ENCODE measurements at regions of chr1 and their contacts with region 1.

Region 1: DNA sequence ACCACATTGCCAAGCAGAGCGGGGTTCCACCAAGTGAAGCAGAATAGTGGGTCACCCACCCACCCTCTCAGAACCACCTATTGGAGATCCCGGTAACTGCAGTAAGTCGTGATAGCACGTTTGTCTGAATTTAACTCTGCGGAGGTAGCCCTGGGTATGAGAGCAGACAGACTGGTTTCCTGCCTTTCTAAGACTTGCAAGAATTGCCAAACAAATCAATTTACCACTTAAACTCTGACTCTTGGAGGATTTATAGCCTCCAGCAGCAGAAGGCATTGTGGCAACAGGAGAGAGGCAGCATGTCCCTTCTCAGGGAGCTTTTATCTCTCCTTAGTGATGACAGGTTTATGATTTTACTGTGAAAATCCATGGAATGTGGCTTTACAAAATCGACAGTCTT is 287.9 kb upstream of the FMN2 start:
- DNase-seq: peak in 1 of 9 experiments; percentile 5
- ATAC-seq: no peak
- H3K4me3 ChIP-seq: no peak overlapping the region
- H3K4me3 Mint-ChIP-seq: no peak overlapping the region
- H3K27ac ChIP-seq: no peak overlapping the region
- H3K27ac Mint-ChIP-seq: no peak overlapping the region
- H3K4me1 ChIP-seq: no peaks in the 10 kb centered on the region
- H3K4me1 Mint-ChIP-seq: peaks cover 9% of the 10 kb centered on the region
- H3K27me3 ChIP-seq: no peaks in the 10 kb centered on the region
- H3K27me3 Mint-ChIP-seq: no peaks in the 10 kb centered on the region
- CTCF ChIP-seq: no peak

Region 2: GRCh38 chr1:239308701-239309333 is 495.0 kb before region 1 on chr1:
- CTCF ChIA-PET with region 1: interaction called, 5 read pairs
- POLR2A ChIA-PET with region 1: no interaction called
- intact Hi-C with region 1: loop called in 1 of 2 experiments (anchors 5 kb)
- DNase-seq: peak in 5 of 9 experiments; percentile 3 to 21 (median 10)
- ATAC-seq: no peak
- H3K4me3 ChIP-seq: no peak overlapping the region
- H3K4me3 Mint-ChIP-seq: no peak overlapping the region
- H3K27ac ChIP-seq: no peak overlapping the region
- H3K27ac Mint-ChIP-seq: no peak overlapping the region
- H3K4me1 ChIP-seq: no peaks in the 10 kb centered on the region
- H3K4me1 Mint-ChIP-seq: no peaks in the 10 kb centered on the region
- H3K27me3 ChIP-seq: no peaks in the 10 kb centered on the region
- H3K27me3 Mint-ChIP-seq: no peaks in the 10 kb centered on the region
- CTCF ChIP-seq: peak; percentile 41

Region 3: DNA sequence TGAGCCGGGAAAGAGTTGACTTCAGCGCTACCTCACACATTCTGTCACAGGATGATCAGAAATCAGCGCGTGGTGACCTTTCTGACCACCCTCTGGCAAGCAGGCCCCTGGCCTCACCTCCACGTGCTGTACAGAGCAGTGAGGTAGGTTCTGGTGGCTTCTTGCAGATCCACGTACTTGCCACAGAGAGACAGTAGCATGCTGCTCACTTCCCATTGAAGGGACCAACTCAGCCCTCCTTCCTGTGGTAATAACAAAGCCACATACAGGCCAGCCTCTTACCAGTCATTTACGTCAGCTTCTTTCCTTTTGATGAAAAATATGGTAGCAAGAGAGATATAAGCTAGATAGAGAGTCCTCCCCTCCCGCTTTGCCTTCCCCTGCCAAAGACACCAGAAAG is 216.7 kb before region 1 on chr1:
- CTCF ChIA-PET with region 1: interaction called, 28 read pairs
- POLR2A ChIA-PET with region 1: no interaction called
- intact Hi-C with region 1: loop called (anchors 1 to 5 kb)
- DNase-seq: peak in 8 of 9 experiments; percentile 1 to 80 (median 42)
- ATAC-seq: peak; percentile 99
- H3K4me3 ChIP-seq: no peak overlapping the region
- H3K4me3 Mint-ChIP-seq: peak overlapping the region; percentile 20
- H3K27ac ChIP-seq: no peak overlapping the region
- H3K27ac Mint-ChIP-seq: peak overlapping the region; percentile 10
- H3K4me1 ChIP-seq: peaks cover 10% of the 10 kb centered on the region
- H3K4me1 Mint-ChIP-seq: peaks cover 14% of the 10 kb centered on the region
- H3K27me3 ChIP-seq: no peaks in the 10 kb centered on the region
- H3K27me3 Mint-ChIP-seq: no peaks in the 10 kb centered on the region
- CTCF ChIP-seq: peak; percentile 28

Region 4: DNA sequence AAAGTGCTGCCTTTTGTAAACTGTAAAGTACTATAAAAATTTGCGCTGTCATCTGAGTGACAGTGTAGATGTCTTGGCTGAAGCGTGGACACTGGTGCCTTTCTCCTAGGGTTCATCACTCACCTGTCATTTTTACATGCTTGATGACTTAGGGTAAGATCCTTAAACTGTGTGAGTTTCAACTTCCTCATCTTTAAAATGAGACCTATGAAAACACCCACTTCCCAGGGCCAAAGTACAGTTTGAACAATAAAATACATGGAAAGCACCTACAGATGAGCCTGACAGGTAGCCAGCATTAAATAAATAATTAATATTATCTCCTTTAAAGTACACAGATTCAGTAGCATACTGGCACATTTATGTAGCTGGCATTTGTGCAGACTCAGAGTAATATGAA is 107.5 kb before region 1 on chr1:
- CTCF ChIA-PET with region 1: no interaction called
- POLR2A ChIA-PET with region 1: no interaction called
- intact Hi-C with region 1: no loop called
- DNase-seq: no peak
- ATAC-seq: no peak
- H3K4me3 ChIP-seq: no peak overlapping the region
- H3K4me3 Mint-ChIP-seq: no peak overlapping the region
- H3K27ac ChIP-seq: no peak overlapping the region
- H3K27ac Mint-ChIP-seq: no peak overlapping the region
- H3K4me1 ChIP-seq: no peaks in the 10 kb centered on the region
- H3K4me1 Mint-ChIP-seq: peaks cover 12% of the 10 kb centered on the region
- H3K27me3 ChIP-seq: no peaks in the 10 kb centered on the region
- H3K27me3 Mint-ChIP-seq: no peaks in the 10 kb centered on the region
- CTCF ChIP-seq: no peak

Region 5: DNA sequence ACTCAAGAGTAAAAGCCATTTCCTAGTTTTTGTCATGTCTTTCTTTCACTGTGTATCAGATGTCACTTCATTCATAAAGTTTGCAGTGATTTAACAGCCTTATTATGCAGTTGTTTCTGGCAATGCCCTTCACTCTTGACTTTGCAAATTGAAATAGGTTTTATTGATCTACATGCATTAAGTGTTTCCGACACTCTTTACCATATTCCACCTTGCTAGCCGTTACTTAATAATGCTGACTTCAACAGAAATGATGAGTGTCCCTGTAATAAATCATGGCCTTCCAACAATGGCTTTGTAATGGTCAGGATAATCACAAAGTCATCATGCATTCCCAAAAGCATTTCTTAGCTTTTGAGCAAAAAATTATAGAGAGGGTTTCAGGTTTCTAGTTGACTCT is 51.1 kb after region 1 on chr1:
- CTCF ChIA-PET with region 1: no interaction called
- POLR2A ChIA-PET with region 1: no interaction called
- intact Hi-C with region 1: loop called in 1 of 2 experiments (anchors 1 kb)
- DNase-seq: no peak
- ATAC-seq: no peak
- H3K4me3 ChIP-seq: no peak overlapping the region
- H3K4me3 Mint-ChIP-seq: no peak overlapping the region
- H3K27ac ChIP-seq: no peak overlapping the region
- H3K27ac Mint-ChIP-seq: no peak overlapping the region
- H3K4me1 ChIP-seq: no peaks in the 10 kb centered on the region
- H3K4me1 Mint-ChIP-seq: no peaks in the 10 kb centered on the region
- H3K27me3 ChIP-seq: no peaks in the 10 kb centered on the region
- H3K27me3 Mint-ChIP-seq: no peaks in the 10 kb centered on the region
- CTCF ChIP-seq: no peak

Measured in CD8-positive, alpha-beta T cell (primary cell).